GM23248 (cell line): ENCODE measurements at regions of chr2 and their contacts with region 1.

Region 1: DNA sequence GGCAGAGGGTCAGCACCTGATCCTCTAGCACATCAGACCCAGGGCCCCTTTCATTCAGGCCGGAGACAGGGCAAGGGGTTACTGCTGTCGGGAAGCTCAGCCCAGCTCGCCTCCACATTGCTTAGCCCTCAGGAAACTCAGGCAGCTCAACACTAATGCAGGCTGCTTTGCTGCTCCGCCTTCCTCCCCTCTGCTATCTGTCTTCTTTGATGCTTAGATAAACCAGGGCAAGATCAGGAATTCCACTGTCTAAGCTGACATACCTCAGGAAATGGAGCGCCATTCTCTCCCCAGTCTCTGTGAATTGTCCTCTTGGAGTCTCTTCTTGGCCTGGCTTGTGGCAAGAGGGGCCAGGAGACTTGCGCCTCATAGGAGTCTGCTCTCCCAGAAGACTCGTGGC is 25.5 kb upstream of the EXOC6B start:
- DNase-seq: no peak
- H3K4me3 ChIP-seq: no peak overlapping the region
- H3K27ac ChIP-seq: no peak overlapping the region
- H3K4me1 ChIP-seq: no peaks in the 10 kb centered on the region
- H3K27me3 ChIP-seq: peaks cover 58% of the 10 kb centered on the region

Region 2: DNA sequence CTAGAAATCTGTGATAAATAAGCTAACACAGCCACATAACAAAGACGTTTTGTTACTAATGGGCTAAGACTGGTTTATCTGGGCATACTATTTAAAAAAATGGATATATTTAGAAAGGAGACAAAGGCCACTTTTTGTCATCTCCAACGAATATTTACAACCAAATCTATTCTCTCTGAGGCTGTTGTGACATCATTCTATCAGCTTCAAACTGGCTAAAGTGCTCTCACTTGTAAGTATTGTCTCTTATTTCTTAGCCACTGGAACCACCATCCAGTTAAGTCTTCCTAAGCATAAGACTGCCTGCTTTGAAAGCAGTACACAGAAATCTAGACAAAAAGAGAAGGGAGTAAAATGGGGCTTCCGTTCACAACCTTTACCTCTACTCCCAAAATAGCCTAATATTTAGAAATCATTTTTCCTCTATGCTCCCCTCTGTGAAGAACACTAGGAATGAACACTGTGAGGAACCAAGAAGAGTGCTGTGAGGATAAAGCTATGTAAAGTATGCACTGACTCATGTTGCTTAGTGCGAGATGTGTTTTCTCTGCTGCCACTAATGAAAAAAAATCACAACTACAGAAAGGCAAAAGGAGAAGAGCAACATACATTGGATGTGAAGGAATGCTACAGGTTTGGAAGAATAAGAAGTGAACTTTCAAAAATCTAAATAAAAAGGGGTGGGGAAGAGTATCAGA is 289.6 kb before region 1 on chr2:
- in situ Hi-C with region 1: no loop called
- DNase-seq: peak; percentile 77
- H3K4me3 ChIP-seq: peak overlapping the region; percentile 52
- H3K27ac ChIP-seq: peak overlapping the region; percentile 46
- H3K4me1 ChIP-seq: peaks cover 30% of the 10 kb centered on the region
- H3K27me3 ChIP-seq: no peaks in the 10 kb centered on the region

Region 3: DNA sequence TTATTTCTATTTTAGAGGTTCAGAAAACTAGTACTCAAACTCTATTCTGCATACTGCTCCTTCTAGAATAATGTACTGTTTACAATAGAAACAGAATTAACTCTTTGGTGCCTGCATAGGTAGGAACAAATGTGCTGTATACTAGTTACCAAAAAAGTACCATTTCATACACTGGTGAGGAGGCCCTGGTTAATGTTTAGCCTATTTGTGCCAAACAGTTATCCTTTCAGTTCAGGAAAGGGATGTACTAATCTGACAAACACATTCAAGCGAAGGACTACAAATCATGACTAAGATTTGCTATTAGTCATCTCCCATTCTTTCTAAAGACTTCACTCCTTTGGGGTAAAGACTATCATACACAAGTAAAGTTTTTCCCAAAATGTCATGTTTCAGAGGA is 72.9 kb before region 1 on chr2:
- in situ Hi-C with region 1: loop called (anchors 5 kb)
- DNase-seq: peak; percentile 69
- H3K4me3 ChIP-seq: no peak overlapping the region
- H3K27ac ChIP-seq: no peak overlapping the region
- H3K4me1 ChIP-seq: peaks cover 10% of the 10 kb centered on the region; the same call in 1 of the 2 replicates
- H3K27me3 ChIP-seq: no peaks in the 10 kb centered on the region

Region 4: GRCh38 chr2:74671479-74671878 is 1820.2 kb after region 1 on chr2:
- in situ Hi-C with region 1: no loop called
- DNase-seq: peak; percentile 81
- H3K4me3 ChIP-seq: no peak overlapping the region
- H3K27ac ChIP-seq: no peak overlapping the region
- H3K4me1 ChIP-seq: peaks cover 8% of the 10 kb centered on the region
- H3K27me3 ChIP-seq: no peaks in the 10 kb centered on the region